HepG2 (cell line): ENCODE measurements at regions of chr7 and their contacts with region 1.

Region 1: DNA sequence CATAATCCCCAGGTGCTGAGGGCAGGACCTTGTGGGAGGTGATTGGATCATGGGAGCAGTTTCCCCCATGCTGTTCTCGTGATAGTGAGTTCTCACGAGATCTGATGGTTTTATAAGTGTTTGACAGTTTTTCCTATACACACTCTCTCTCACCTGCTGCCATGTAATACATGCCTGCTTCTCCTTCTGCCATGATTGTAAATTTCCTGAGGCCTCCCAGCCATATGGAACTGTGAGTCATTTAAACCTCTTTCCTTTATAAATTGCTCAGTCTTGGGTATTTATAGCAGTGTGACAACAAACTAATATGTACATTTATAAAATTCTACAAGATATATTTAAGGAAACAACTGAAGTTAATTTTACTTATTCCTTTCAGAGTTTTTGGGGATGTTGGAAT is 170.8 kb upstream of the BET1 start:
- DNase-seq: no peak
- ATAC-seq: no peak
- H3K4me3 ChIP-seq: no peak overlapping the region
- H3K27ac ChIP-seq: no peak overlapping the region
- H3K4me1 ChIP-seq: no peaks in the 10 kb centered on the region
- H3K27me3 ChIP-seq: no peaks in the 10 kb centered on the region
- CTCF ChIP-seq: no peak
- EP300 ChIP-seq: no peak
- POLR2A ChIP-seq: no peak
- RAD21 ChIP-seq: no peak

Region 2: DNA sequence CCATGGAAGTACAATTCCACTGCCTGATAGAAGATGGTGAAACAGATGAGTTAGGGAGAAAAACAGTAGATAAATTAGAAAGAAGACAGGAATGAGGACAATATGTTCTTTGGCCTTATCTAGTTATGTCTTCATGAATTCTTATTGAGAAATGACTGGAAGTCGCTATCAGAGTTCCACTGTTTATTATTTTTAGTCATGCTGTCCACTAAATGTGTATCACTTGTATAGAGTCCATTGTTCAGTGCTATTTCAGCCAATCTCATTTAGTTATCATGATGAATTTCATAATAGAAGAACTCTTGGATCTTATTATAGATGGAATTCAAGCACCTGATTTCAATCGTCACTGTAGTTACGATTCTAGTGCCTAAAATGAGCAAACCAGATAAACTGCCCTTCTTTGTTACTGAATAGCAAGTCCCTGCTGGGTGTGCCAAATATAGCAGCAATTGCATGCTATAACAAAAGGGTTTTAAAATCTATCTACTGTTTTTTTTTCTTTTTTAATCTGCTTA is 42.0 kb after region 1 on chr7:
- CTCF ChIA-PET with region 1: no interaction called
- POLR2A ChIA-PET with region 1: no interaction called
- in situ Hi-C with region 1: no loop called
- intact Hi-C with region 1: loop called (anchors 1 kb)
- DNase-seq: no peak
- ATAC-seq: no peak
- H3K4me3 ChIP-seq: no peak overlapping the region
- H3K27ac ChIP-seq: no peak overlapping the region
- H3K4me1 ChIP-seq: peaks cover 16% of the 10 kb centered on the region
- H3K27me3 ChIP-seq: no peaks in the 10 kb centered on the region
- CTCF ChIP-seq: no peak
- EP300 ChIP-seq: no peak
- POLR2A ChIP-seq: no peak
- RAD21 ChIP-seq: no peak

Region 3: DNA sequence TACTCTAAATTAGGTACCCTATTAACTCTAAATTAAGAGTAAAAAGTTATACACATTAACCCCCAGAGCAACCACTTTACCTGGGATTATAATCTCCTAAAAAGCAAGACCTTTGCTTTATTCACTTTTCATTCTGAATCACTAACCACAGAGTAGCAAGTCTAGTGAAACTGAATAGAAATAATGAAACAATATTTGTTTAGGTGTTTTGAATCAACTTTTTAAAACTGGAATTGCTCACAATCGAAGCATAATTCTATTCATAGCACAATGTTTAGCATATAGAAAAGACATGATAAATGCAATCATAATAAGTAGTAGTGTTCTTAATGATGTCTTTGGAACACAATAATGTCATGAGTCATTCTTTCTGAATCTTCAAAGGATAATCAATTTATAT is 297.7 kb after region 1 on chr7:
- CTCF ChIA-PET with region 1: no interaction called
- POLR2A ChIA-PET with region 1: no interaction called
- in situ Hi-C with region 1: no loop called
- intact Hi-C with region 1: no loop called
- DNase-seq: no peak
- ATAC-seq: no peak
- H3K4me3 ChIP-seq: no peak overlapping the region
- H3K27ac ChIP-seq: no peak overlapping the region
- H3K4me1 ChIP-seq: peaks cover 20% of the 10 kb centered on the region
- H3K27me3 ChIP-seq: no peaks in the 10 kb centered on the region
- CTCF ChIP-seq: no peak
- EP300 ChIP-seq: no peak
- POLR2A ChIP-seq: no peak
- RAD21 ChIP-seq: no peak